ENCODE measurements at regions of chr11 and their contacts with region 1.

Region 1: DNA sequence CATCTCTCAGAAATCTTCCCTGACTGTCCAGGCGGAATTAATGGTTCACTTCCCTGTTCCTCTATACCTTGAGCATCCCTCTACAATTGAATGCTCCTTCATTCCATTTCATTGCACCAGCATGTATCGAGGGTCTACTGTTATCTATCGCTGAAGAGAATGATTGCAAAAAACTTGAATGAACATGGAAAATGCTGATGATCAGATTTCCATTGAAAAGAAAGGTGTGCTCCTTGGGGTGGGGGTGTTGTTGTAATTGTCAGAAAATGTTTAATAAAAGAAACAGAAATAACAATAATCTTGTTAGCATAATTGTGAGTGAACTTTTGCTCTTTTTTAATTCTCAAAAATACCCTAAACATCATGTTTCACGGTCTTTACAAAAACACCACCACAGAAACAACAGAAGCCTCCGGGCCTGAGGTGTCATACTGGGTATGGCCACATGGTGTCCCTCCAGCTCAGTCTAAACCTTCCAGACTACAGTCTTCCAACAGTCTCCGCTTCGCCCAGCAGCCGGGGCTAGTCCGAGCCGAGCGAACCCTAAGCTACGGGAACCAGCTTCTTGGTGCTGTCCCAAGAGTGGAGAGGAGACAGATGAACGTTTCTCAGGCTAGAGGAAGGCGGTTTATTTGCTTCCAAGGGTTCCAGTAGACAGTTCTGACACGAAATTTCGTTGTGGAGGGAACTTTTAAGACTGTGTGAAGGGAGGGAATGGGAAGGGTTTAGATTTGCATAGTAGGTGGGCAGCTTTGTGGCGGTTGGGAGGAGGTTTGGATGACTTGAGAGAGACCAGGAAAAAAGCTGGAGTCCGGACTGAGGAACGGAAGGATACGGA is 75.8 kb upstream of the ZBED5 start:
- DNase-seq: peak; percentile 79
- CTCF ChIP-seq: peak; percentile 89

Region 2: GRCh38 chr11:10943968-10944367 is 10.3 kb after region 1 on chr11:
- CTCF ChIA-PET with region 1: interaction called, 36 read pairs
- POLR2A ChIA-PET with region 1: no interaction called
- DNase-seq: no peak
- CTCF ChIP-seq: no peak

Region 3: GRCh38 chr11:11010624-11011127 is 77.0 kb after region 1 on chr11:
- CTCF ChIA-PET with region 1: interaction called, 15 read pairs
- POLR2A ChIA-PET with region 1: no interaction called
- DNase-seq: no peak
- CTCF ChIP-seq: no peak

Region 4: GRCh38 chr11:11022125-11022730 is 88.6 kb after region 1 on chr11:
- CTCF ChIA-PET with region 1: interaction called, 57 read pairs
- POLR2A ChIA-PET with region 1: no interaction called
- DNase-seq: peak; percentile 40
- CTCF ChIP-seq: peak; percentile 45

Region 5: DNA sequence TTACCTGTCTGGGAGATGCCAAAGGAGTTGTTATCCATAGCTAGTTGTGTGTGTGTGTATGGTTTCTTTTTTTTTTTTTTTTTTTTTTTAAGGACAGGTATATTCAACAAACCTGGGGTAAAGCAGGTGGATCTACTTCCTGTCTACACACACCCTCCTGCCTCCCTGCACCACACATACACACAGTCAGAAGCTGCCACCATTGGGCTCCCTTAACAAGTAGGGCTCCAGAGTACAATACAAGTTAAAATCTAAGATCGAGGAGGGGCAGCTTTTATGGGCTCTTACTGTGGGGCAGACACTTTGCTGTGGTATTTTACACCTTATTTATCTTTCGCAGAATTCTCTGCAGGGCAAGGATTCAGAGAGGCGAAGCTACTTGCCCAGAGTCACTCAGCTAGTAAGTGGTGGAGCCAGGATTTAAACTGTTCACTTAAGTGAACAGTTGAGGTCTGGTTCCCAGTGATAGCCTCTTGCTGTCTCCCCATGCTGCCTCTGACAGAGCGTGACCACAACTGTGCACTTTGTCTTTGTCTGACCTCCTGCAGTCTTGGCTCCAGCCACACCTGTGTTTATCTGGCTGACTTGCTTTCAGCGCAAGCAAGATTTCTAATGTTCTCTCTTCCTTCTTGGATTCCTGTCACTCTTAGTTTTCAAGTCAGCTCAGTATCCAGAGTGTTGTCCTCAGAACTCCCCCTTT is 284.4 kb after region 1 on chr11:
- CTCF ChIA-PET with region 1: no interaction called
- POLR2A ChIA-PET with region 1: no interaction called
- DNase-seq: no peak
- CTCF ChIP-seq: no peak